ENCODE measurements at regions of chr11 and their contacts with region 1.

Region 1: DNA sequence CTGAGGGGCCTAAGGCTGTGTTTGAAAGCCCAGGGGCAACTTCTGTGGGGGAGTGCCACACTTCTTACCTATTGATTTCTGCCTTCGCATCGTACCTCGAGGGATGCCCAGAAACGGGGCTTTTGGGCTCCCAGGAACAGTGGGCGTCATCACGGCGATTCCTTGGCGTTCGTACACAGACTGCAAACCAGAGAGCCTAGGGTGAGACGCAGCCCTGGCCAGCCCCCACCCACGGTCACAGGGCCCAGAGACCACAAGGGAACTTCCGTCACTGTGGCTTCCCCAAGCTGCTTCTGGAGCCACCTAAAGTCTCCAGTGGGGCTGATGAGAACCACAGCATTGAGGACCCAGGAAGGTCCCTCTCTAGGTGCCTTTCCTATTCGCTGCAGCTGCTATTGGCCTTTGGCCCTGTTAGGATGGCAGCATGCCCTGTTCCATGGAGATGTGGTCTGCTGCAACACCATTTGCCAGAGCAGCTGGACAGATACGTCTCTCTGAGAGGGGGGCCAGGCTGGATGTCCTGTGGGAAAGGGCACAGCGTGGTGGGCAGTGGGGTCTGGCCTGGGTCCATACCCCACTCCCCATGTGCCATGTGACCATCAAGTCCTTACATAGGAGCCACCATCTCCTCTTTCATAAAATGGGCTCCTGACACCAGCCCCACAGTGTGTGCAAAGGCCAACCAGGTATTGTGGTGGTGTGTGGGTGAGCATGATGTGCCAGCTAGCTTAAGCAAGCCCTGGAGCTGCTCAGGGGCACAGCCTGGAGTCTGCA is 92.1 kb downstream of the CTTN start:
- DNase-seq: no peak
- ATAC-seq: no peak
- H3K4me3 ChIP-seq: no peak overlapping the region
- H3K4me3 Mint-ChIP-seq: no peak overlapping the region
- H3K27ac ChIP-seq: no peak overlapping the region
- H3K27ac Mint-ChIP-seq: no peak overlapping the region
- H3K4me1 ChIP-seq: no peaks in the 10 kb centered on the region
- H3K4me1 Mint-ChIP-seq: no peaks in the 10 kb centered on the region
- H3K27me3 ChIP-seq: no peaks in the 10 kb centered on the region
- H3K27me3 Mint-ChIP-seq: peaks cover 1% of the 10 kb centered on the region
- CTCF ChIP-seq: no peak

Region 2: DNA sequence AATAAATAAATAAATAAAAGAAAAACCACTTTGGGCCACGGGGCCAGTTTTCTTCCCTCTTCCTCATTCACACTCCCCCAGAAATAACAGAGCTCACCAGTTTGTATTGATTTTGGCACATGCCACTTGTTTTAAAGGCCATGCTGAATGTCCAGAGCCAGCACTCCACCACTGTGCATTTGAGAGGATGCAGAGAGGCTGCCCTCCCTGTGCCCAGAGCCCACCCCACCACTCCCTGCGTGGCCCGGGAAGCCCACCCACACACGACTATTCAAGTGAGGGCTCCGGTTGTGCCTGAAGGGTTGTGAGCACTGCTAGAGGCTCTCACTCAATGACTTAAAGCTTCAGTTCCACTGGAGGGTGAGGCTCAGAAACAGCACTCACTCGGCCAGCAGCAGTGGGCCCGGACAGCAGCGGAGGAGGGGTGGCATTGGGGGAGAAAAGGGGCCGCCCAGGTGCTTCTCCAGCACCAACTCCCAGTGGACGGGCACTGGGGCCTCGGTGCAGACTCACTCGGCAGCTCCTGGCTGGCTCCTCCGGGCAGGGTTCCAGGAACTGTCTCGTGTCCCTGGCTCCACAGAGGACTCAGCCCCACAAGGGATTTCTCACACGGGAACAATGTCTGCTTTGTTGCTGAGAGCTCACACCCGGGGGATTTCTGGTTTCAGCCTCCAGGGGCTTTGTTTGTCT is 649.3 kb after region 1 on chr11:
- CTCF ChIA-PET with region 1: no interaction called
- POLR2A ChIA-PET with region 1: no interaction called
- intact Hi-C with region 1: loop called in 1 of 2 experiments (anchors 10 kb)
- DNase-seq: no peak
- ATAC-seq: no peak
- H3K4me3 ChIP-seq: no peak overlapping the region
- H3K4me3 Mint-ChIP-seq: no peak overlapping the region
- H3K27ac ChIP-seq: no peak overlapping the region
- H3K27ac Mint-ChIP-seq: no peak overlapping the region
- H3K4me1 ChIP-seq: no peaks in the 10 kb centered on the region
- H3K4me1 Mint-ChIP-seq: no peaks in the 10 kb centered on the region
- H3K27me3 ChIP-seq: no peaks in the 10 kb centered on the region
- H3K27me3 Mint-ChIP-seq: peaks cover 4% of the 10 kb centered on the region
- CTCF ChIP-seq: no peak